ENCODE measurements at regions of chr6 and their contacts with region 1.

Region 1: DNA sequence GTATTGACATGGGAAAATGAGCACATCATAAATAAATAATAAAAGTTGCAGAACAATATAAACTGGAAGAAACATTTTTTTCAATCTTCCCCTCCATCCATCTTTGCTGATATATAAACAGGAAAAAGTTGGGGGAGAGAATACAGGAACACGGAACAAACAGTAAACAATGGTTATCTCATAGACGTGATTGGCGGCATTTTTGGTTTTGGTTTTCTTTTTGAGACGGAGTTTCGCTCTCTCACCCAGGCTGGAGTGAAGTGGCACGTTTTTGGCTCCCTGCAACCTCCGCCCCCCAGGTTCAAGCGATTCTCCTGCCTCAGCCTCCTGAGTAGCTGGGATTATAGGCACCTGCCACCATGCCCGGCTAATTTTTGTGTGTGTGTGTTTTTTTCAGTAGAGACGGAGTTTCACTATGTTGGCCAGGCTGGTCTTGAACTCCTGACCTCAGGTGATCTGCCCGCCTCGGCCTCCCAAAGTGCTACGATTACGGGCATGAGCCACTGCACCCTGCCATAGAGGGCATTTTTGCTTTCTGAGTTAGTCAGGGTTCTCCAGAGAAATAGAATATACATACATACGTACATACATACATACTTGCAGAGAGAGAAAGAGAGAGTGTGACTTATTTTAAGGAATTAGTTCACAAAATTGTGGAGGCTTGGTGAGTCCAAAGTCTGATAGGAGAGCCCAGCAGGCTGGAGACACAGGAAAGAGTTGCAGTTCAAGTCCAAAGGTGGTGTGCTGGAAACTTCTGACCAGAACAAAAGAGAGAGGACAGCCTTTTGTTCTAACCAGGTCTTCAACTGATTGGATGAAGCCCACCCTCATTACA is 22.6 kb downstream of the GNL1 start:
- DNase-seq: no peak
- H3K4me3 ChIP-seq: no peak overlapping the region
- H3K4me3 Mint-ChIP-seq: no peak overlapping the region
- H3K27ac ChIP-seq: no peak overlapping the region
- H3K27ac Mint-ChIP-seq: peak overlapping the region in 1 of 7 donors; percentile 18
- H3K4me1 ChIP-seq: peaks cover 29 to 32% of the 10 kb centered on the region in 2 donors
- H3K4me1 Mint-ChIP-seq: peaks cover 29% of the 10 kb centered on the region
- H3K27me3 ChIP-seq: no peaks in the 10 kb centered on the region
- H3K27me3 Mint-ChIP-seq: peaks cover 4 to 7% (median 4%) of the 10 kb centered on the region in 3 donors
- CTCF ChIP-seq: no peak

Region 2: GRCh38 chr6:29816030-29816429 is 717.6 kb before region 1 on chr6:
- intact Hi-C with region 1: no loop called
- DNase-seq: no peak
- H3K4me3 ChIP-seq: no peak overlapping the region
- H3K4me3 Mint-ChIP-seq: no peak overlapping the region
- H3K27ac ChIP-seq: no peak overlapping the region
- H3K27ac Mint-ChIP-seq: peak overlapping the region in 1 of 7 donors; percentile 55
- H3K4me1 ChIP-seq: no peaks in the 10 kb centered on the region
- H3K4me1 Mint-ChIP-seq: peaks cover 6% of the 10 kb centered on the region
- H3K27me3 ChIP-seq: peaks cover 0 to 3% of the 10 kb centered on the region in 2 donors
- H3K27me3 Mint-ChIP-seq: peaks cover 0 to 12% (median 11%) of the 10 kb centered on the region in 3 donors
- CTCF ChIP-seq: no peak

Region 3: DNA sequence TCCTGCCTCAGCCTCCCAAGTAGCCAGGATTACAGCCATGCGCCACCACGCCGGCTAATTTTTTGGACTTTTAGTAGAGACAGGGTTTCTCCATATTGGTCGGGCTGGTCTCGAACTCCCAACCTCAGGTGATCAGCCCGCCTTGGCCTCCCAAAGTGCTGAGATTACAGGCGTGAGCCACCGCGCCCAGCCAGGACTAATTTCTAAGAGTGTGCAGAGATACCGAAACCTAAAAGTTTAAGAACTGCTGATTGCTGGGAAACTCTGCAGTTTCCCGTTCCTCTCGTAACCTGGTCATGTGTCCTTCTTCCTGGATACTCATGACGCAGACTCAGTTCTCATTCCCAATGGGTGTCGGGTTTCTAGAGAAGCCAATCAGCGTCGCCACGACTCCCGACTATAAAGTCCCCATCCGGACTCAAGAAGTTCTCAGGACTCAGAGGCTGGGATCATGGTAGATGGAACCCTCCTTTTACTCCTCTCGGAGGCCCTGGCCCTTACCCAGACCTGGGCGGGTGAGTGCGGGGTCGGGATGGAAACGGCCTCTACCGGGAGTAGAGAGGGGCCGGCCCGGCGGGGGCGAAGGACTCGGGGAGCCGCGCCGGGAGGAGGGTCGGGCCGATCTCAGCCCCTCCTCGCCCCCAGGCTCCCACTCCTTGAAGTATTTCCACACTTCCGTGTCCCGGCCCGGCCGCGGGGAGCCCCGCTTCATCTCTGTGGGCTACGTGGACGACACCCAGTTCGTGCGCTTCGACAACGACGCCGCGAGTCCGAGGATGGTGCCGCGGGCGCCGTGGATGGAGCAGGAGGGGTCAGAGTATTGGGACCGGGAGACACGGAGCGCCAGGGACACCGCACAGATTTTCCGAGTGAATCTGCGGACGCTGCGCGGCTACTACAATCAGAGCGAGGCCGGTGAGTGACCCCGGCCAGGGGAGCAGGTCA is 44.3 kb before region 1 on chr6 and contains the start of gene HLA-E:
- intact Hi-C with region 1: loop called in 1 of 2 experiments (anchors 5 kb)
- DNase-seq: peak; percentile 99 to 100 (median 100)
- H3K4me3 ChIP-seq: peak within 1 kb of the TSS; percentile 64 to 99 (median 88)
- H3K4me3 Mint-ChIP-seq: peak within 1 kb of the TSS; percentile 97 to 99
- H3K27ac ChIP-seq: peak within 1 kb of the TSS; percentile 91 to 95
- H3K27ac Mint-ChIP-seq: peak within 1 kb of the TSS; percentile 94 to 98 (median 97)
- H3K4me1 ChIP-seq: peaks cover 42 to 47% of the 10 kb centered on the region in 2 donors
- H3K4me1 Mint-ChIP-seq: peaks cover 51% of the 10 kb centered on the region
- H3K27me3 ChIP-seq: no peaks in the 10 kb centered on the region
- H3K27me3 Mint-ChIP-seq: peaks cover 2 to 12% (median 7%) of the 10 kb centered on the region in 3 donors
- CTCF ChIP-seq: no peak
- polyA plus RNA-seq, gene HLA-E: 870 to 944 (median 893) TPM

Region 4: GRCh38 chr6:30515932-30516753 is 17.5 kb before region 1 on chr6:
- intact Hi-C with region 1: loop called in 1 of 2 experiments (anchors 2 kb)
- DNase-seq: peak; percentile 98 to 99 (median 99)
- H3K4me3 ChIP-seq: peak overlapping the region; percentile 22 to 76 (median 35)
- H3K4me3 Mint-ChIP-seq: peak overlapping the region; percentile 79 to 88
- H3K27ac ChIP-seq: peak overlapping the region; percentile 96 to 99
- H3K27ac Mint-ChIP-seq: peak overlapping the region; percentile 97 to 100 (median 99)
- H3K4me1 ChIP-seq: peaks cover 37 to 42% of the 10 kb centered on the region in 2 donors
- H3K4me1 Mint-ChIP-seq: peaks cover 36% of the 10 kb centered on the region
- H3K27me3 ChIP-seq: no peaks in the 10 kb centered on the region
- H3K27me3 Mint-ChIP-seq: no peaks in the 10 kb centered on the region
- CTCF ChIP-seq: no peak